B cell (primary cell): ENCODE measurements at regions of chr9 and their contacts with region 1.

Region 1: DNA sequence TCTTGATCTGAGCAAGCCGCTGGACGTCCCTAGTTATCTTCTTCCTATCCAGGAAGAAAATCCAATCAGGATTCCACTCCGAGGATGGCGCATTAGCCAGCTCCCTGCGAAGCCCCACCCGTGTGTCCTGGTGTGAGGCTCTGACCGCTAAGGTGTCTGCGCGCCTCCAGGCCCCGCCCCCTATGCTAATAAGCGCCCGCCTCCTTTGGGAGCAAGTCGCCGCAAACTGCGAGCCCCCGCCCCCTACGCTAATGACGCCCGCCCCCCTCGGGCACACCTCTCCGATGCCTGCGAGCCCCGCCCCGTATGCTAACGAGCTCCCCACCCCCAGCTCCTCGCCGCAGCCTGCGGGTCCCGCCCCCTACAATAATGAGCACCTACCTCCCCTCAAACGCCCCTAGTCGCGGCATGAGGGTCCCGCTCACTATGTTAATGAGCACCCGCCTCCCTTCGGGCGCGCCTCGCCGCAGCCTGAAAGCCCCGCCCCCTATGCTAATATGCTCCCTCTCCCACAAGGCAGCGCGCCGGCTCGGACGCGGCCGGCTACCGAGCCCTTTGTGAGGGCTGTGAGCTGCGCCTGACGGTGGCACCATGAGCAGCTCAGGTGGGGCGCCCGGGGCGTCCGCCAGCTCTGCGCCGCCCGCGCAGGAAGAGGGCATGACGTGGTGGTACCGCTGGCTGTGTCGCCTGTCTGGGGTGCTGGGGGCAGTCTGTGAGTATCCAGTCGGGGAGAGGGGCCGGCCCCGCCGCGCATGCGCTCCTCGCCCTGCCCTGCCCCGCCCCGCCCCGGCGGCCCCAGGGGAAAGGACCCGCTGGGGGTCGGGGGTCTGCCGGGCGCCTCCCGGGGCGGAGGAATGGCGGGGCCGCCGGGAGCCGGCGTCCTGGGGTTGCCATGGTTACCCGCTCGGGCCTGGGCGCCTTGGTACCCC is at the start of gene CACFD1:
- DNase-seq: peak; percentile 97
- ATAC-seq: peak; percentile 74
- H3K4me3 ChIP-seq: peak within 1 kb of the TSS; percentile 31 to 86 (median 79)
- H3K4me3 Mint-ChIP-seq: peak within 1 kb of the TSS; percentile 94
- H3K27ac ChIP-seq: peak within 1 kb of the TSS; percentile 83 to 98
- H3K27ac Mint-ChIP-seq: peak within 1 kb of the TSS; percentile 99
- H3K4me1 ChIP-seq: peaks cover 13 to 35% of the 10 kb centered on the region in 2 donors
- H3K4me1 Mint-ChIP-seq: peaks cover 23% of the 10 kb centered on the region
- H3K27me3 ChIP-seq: no peaks in the 10 kb centered on the region
- H3K27me3 Mint-ChIP-seq: no peaks in the 10 kb centered on the region
- CTCF ChIP-seq: no peak
- total RNA-seq, gene CACFD1: 31.1 and 37.1 TPM in 2 replicates

Region 2: GRCh38 chr9:133347985-133348717 is 111.6 kb before region 1 on chr9 and contains the starts of genes MED22 and RPL7A:
- CTCF ChIA-PET with region 1: no interaction called
- POLR2A ChIA-PET with region 1: interaction called, 6 read pairs
- intact Hi-C with region 1: loop called (anchors 1 kb)
- DNase-seq: peak; percentile 97
- ATAC-seq: peak; percentile 83
- H3K4me3 ChIP-seq: peak within 1 kb of the TSS; percentile 86 to 96 (median 92)
- H3K4me3 Mint-ChIP-seq: peak within 1 kb of the TSS; percentile 97
- H3K27ac ChIP-seq: peak within 1 kb of the TSS; percentile 87 to 90
- H3K27ac Mint-ChIP-seq: peak within 1 kb of the TSS; percentile 95
- H3K4me1 ChIP-seq: peaks cover 21 to 25% of the 10 kb centered on the region in 2 donors
- H3K4me1 Mint-ChIP-seq: peaks cover 36% of the 10 kb centered on the region
- H3K27me3 ChIP-seq: no peaks in the 10 kb centered on the region
- H3K27me3 Mint-ChIP-seq: no peaks in the 10 kb centered on the region
- CTCF ChIP-seq: no peak
- total RNA-seq, gene MED22: 50.4 and 56.9 TPM in 2 replicates
- total RNA-seq, gene RPL7A: 2,342 and 2,407 TPM in 2 replicates

Region 3: DNA sequence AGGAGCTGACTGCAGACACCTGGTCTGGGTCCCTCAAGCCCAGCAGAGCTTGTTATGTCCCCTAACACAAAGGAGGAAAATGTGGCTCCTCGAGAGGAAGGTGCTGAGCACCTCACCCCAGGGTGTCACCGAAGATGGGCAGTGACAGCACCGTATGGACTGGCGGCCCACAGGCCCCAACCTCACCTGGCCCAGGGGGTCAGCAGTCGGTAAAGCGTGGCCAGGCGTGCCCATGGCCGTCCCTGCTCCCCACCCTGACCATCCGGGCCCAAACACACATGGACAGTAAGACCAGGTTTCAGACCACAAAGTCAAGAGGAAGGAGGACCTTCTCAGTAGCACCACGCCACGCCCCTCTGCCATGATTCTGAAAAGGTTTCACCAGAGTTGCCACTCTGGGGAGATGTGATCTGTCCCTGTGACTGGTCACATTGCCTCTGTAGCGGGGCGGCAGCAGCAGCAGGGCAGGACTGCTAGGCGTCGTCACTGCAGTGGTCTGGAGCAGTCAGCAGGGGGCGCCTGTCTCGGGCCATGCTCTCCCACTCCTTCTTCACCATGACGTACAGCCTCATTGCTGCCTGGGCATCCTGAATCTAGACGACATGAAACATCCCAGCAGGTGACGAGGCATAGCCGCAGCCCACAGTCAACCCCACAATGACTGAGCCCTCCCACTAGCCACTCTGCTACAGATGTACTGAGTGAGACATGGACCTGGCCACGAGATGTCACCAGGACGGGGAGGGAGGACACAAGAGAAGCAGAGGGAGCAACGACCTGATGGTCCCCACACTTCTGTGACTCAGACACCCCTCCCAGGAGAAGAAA is 53.0 kb before region 1 on chr9:
- CTCF ChIA-PET with region 1: interaction called, 4 read pairs
- POLR2A ChIA-PET with region 1: no interaction called
- intact Hi-C with region 1: loop called (anchors 2 kb)
- DNase-seq: peak; percentile 86
- ATAC-seq: peak; percentile 93
- H3K4me3 ChIP-seq: no peak overlapping the region
- H3K4me3 Mint-ChIP-seq: no peak overlapping the region
- H3K27ac ChIP-seq: no peak overlapping the region
- H3K27ac Mint-ChIP-seq: peak overlapping the region; percentile 46
- H3K4me1 ChIP-seq: peaks cover 0 to 2% of the 10 kb centered on the region in 2 donors
- H3K4me1 Mint-ChIP-seq: peaks cover 2% of the 10 kb centered on the region
- H3K27me3 ChIP-seq: no peaks in the 10 kb centered on the region
- H3K27me3 Mint-ChIP-seq: no peaks in the 10 kb centered on the region
- CTCF ChIP-seq: peak; percentile 87

Region 4: GRCh38 chr9:133440874-133441273 is 18.9 kb before region 1 on chr9:
- CTCF ChIA-PET with region 1: no interaction called
- POLR2A ChIA-PET with region 1: interaction called, 7 read pairs
- intact Hi-C with region 1: loop called (anchors 1 kb)
- DNase-seq: peak; percentile 91
- ATAC-seq: peak; percentile 99
- H3K4me3 ChIP-seq: no peak overlapping the region
- H3K4me3 Mint-ChIP-seq: peak overlapping the region; percentile 34
- H3K27ac ChIP-seq: peak overlapping the region; percentile 89 to 93
- H3K27ac Mint-ChIP-seq: peak overlapping the region; percentile 97
- H3K4me1 ChIP-seq: peaks cover 17 to 29% of the 10 kb centered on the region in 2 donors
- H3K4me1 Mint-ChIP-seq: peaks cover 24% of the 10 kb centered on the region
- H3K27me3 ChIP-seq: peaks cover 0 to 5% (median 0%) of the 10 kb centered on the region in 4 experiments
- H3K27me3 Mint-ChIP-seq: no peaks in the 10 kb centered on the region
- CTCF ChIP-seq: no peak

Region 5: GRCh38 chr9:133485361-133486260 is 25.9 kb after region 1 on chr9:
- CTCF ChIA-PET with region 1: interaction called, 6 read pairs
- POLR2A ChIA-PET with region 1: interaction called, 3 read pairs
- intact Hi-C with region 1: loop called (anchors 2 kb)
- DNase-seq: no peak
- ATAC-seq: peak; percentile 62
- H3K4me3 ChIP-seq: peak overlapping the region in 3 of 5 experiments; percentile 14 to 31 (median 28)
- H3K4me3 Mint-ChIP-seq: peak overlapping the region; percentile 59
- H3K27ac ChIP-seq: no peak overlapping the region
- H3K27ac Mint-ChIP-seq: no peak overlapping the region
- H3K4me1 ChIP-seq: peaks cover 5 to 10% of the 10 kb centered on the region in 2 donors
- H3K4me1 Mint-ChIP-seq: peaks cover 4% of the 10 kb centered on the region
- H3K27me3 ChIP-seq: peaks cover 0 to 10% (median 0%) of the 10 kb centered on the region in 4 experiments
- H3K27me3 Mint-ChIP-seq: peaks cover 18% of the 10 kb centered on the region
- CTCF ChIP-seq: no peak

Region 6: DNA sequence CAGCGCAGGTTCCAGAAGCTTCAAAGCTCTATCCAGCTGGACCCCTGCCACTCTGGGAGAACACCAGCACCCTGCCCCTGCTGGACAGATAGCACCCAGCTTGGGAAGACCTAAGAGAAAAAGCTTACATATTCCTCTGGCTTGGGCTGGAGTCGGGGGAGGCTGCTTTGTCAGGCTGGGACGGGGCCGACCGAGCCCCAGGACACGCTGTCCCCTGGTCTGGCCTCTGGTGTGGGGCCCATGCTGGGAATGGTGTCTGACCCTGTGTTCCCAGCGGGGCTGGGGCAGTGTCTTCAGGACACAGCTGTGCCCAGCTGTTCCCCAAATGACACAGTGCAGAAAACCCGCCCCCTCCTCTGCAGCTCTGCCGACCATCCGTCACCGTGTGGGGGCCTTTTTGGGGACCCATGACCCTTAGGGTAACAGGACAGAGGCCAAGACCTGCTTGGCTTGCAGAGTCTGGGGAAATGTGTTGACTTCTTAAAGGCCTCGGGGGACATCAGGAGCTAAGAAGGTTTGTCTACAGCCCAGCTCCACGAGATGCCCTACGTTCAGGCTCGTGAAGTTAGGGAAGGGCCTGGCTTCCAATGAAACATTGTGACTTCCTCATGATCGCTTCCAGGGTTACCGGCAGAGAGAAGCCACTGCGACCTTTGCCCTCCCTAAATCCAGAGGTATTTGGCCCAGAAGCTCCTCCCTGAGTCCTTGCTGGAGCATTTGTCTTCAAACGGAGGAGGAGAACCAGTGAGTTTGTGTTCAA is 39.6 kb after region 1 on chr9:
- CTCF ChIA-PET with region 1: no interaction called
- POLR2A ChIA-PET with region 1: no interaction called
- intact Hi-C with region 1: no loop called
- DNase-seq: no peak
- ATAC-seq: no peak
- H3K4me3 ChIP-seq: no peak overlapping the region
- H3K4me3 Mint-ChIP-seq: no peak overlapping the region
- H3K27ac ChIP-seq: no peak overlapping the region
- H3K27ac Mint-ChIP-seq: no peak overlapping the region
- H3K4me1 ChIP-seq: no peaks in the 10 kb centered on the region
- H3K4me1 Mint-ChIP-seq: no peaks in the 10 kb centered on the region
- H3K27me3 ChIP-seq: peaks cover 0 to 12% (median 0%) of the 10 kb centered on the region in 4 experiments
- H3K27me3 Mint-ChIP-seq: peaks cover 22% of the 10 kb centered on the region
- CTCF ChIP-seq: no peak

Region 7: GRCh38 chr9:133538851-133539833 is 79.4 kb after region 1 on chr9:
- CTCF ChIA-PET with region 1: no interaction called
- POLR2A ChIA-PET with region 1: no interaction called
- intact Hi-C with region 1: no loop called
- DNase-seq: no peak
- ATAC-seq: no peak
- H3K4me3 ChIP-seq: no peak overlapping the region
- H3K4me3 Mint-ChIP-seq: peak overlapping the region; percentile 41
- H3K27ac ChIP-seq: no peak overlapping the region
- H3K27ac Mint-ChIP-seq: no peak overlapping the region
- H3K4me1 ChIP-seq: peaks cover 14% of the 10 kb centered on the region in 2 donors
- H3K4me1 Mint-ChIP-seq: peaks cover 16% of the 10 kb centered on the region
- H3K27me3 ChIP-seq: peaks cover 0 to 40% (median 7%) of the 10 kb centered on the region in 4 experiments
- H3K27me3 Mint-ChIP-seq: peaks cover 18% of the 10 kb centered on the region
- CTCF ChIP-seq: no peak